Breast epithelium (tissue), 4 donors: ENCODE measurements at regions of chr10 and their contacts with region 1.

Region 1: DNA sequence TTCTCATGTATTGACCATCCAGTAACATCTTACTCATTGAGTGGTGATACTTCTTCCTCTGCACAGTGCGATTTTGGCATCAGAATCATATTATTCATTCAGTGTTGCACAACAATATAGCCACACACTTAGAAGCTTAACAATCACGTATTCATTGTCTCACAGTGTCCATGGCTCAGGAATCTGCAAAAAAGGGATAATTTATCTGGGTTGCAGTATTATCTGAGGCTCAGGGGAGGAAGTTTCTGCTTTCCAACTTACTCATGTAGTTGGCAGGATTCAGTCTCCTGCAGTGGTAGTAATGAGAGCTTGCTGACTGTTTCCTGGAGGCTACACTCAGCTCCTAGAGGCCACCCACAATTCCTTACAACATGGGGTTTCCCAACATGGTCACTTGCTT is 803.6 kb downstream of the SORCS1 start:
- DNase-seq: no peak
- H3K4me3 ChIP-seq: no peak overlapping the region
- H3K27ac ChIP-seq: no peak overlapping the region
- H3K4me1 ChIP-seq: no peaks in the 10 kb centered on the region
- H3K27me3 ChIP-seq: no peaks in the 10 kb centered on the region
- CTCF ChIP-seq: no peak
- POLR2A ChIP-seq: no peak

Region 2: GRCh38 chr10:107356396-107356795 is 995.5 kb after region 1 on chr10:
- intact Hi-C with region 1: no loop called
- DNase-seq: no peak
- H3K4me3 ChIP-seq: no peak overlapping the region
- H3K27ac ChIP-seq: no peak overlapping the region
- H3K4me1 ChIP-seq: no peaks in the 10 kb centered on the region
- H3K27me3 ChIP-seq: no peaks in the 10 kb centered on the region
- CTCF ChIP-seq: no peak
- POLR2A ChIP-seq: no peak

Region 3: DNA sequence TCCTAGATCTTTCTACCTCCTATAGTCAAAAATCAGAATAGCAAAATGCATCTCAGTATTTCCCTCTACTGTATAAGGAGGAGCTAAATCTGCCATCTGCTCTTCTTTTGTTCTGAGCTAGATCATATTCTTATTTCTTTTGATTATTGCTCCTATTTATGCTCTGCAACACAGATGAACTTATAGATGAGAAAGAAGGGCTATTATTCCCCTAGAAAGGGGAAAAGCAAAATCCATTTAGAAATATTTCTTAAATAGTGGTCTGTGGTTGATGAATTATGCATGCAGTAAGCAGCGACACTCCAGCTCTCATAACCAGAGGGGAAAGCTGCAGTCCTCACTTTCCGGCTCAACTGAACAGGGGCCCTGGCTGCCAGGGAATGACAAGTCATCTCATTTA is 1010.9 kb after region 1 on chr10:
- intact Hi-C with region 1: loop called (anchors 10 kb)
- DNase-seq: no peak
- H3K4me3 ChIP-seq: no peak overlapping the region
- H3K27ac ChIP-seq: no peak overlapping the region
- H3K4me1 ChIP-seq: no peaks in the 10 kb centered on the region
- H3K27me3 ChIP-seq: no peaks in the 10 kb centered on the region
- CTCF ChIP-seq: no peak
- POLR2A ChIP-seq: no peak